ENCODE measurements at regions of chr7 and their contacts with region 1.

Region 1: GRCh38 chr7:129163875-129164544 is 19.5 kb downstream of the TSPAN33 start:
- DNase-seq: no peak
- H3K4me3 Mint-ChIP-seq: no peak overlapping the region
- H3K27ac Mint-ChIP-seq: no peak overlapping the region
- H3K4me1 Mint-ChIP-seq: peaks cover 11% of the 10 kb centered on the region
- H3K27me3 Mint-ChIP-seq: peaks cover 17% of the 10 kb centered on the region

Region 2: GRCh38 chr7:129136887-129137642 is 26.9 kb before region 1 on chr7:
- CTCF ChIA-PET with region 1: interaction called, 11 read pairs
- DNase-seq: no peak
- H3K4me3 Mint-ChIP-seq: no peak overlapping the region
- H3K27ac Mint-ChIP-seq: peak overlapping the region; percentile 82
- H3K4me1 Mint-ChIP-seq: peaks cover 26% of the 10 kb centered on the region
- H3K27me3 Mint-ChIP-seq: peaks cover 5% of the 10 kb centered on the region

Region 3: DNA sequence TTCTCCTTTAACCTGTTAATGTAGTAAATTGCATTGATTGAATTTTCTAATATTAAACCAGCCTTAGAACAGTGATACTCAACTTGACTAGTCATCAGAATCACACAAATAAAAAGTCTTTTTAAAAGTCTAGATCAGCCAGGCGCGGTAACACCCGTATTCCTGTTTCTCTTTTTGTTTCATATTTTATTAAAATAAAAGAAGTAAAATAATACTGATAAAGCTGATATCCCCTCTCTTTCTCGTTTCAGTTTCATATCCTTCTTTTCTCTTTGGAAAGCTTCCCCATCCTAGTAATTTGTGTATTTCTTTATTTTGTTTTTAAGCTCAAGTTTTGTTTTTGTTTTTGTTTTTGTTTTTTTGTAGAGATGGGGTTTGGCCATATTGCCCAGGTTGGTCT is 33.8 kb after region 1 on chr7:
- CTCF ChIA-PET with region 1: interaction called, 10 read pairs
- DNase-seq: no peak
- H3K4me3 Mint-ChIP-seq: no peak overlapping the region
- H3K27ac Mint-ChIP-seq: no peak overlapping the region
- H3K4me1 Mint-ChIP-seq: no peaks in the 10 kb centered on the region
- H3K27me3 Mint-ChIP-seq: peaks cover 6% of the 10 kb centered on the region

Region 4: GRCh38 chr7:129308047-129308446 is 144.0 kb after region 1 on chr7:
- CTCF ChIA-PET with region 1: no interaction called
- DNase-seq: no peak
- H3K4me3 Mint-ChIP-seq: no peak overlapping the region
- H3K27ac Mint-ChIP-seq: no peak overlapping the region
- H3K4me1 Mint-ChIP-seq: no peaks in the 10 kb centered on the region
- H3K27me3 Mint-ChIP-seq: no peaks in the 10 kb centered on the region

Region 5: GRCh38 chr7:129801882-129802473 is 638.0 kb after region 1 on chr7:
- CTCF ChIA-PET with region 1: no interaction called
- DNase-seq: no peak
- H3K4me3 Mint-ChIP-seq: no peak overlapping the region
- H3K27ac Mint-ChIP-seq: no peak overlapping the region
- H3K4me1 Mint-ChIP-seq: no peaks in the 10 kb centered on the region
- H3K27me3 Mint-ChIP-seq: peaks cover 20% of the 10 kb centered on the region

Measured in activated naive CD4-positive, alpha-beta T cell treated with anti-CD3 and anti-CD28 coated beads, Interleukin-2, amount 10 ng/mL, durations not matched to agents 7 days and 5 days (primary cell).